Ascending aorta (tissue), 2 donors: ENCODE measurements at regions of chr5 and their contacts with region 1.

Region 1: GRCh38 chr5:60944904-60945812 is at the starts of genes ERCC8 and NDUFAF2:
- DNase-seq: peak; percentile 77 to 96
- H3K4me3 ChIP-seq: peak within 1 kb of the TSS; percentile 80 to 90
- H3K27ac ChIP-seq: peak within 1 kb of the TSS; percentile 84 to 91
- H3K4me1 ChIP-seq: peaks cover 0 to 4% of the 10 kb centered on the region in 2 donors
- H3K27me3 ChIP-seq: no peaks in the 10 kb centered on the region
- CTCF ChIP-seq: no peak
- total RNA-seq, gene ERCC8: 2.3 TPM
- total RNA-seq, gene NDUFAF2: 38.3 TPM

Region 2: GRCh38 chr5:61162010-61162831 is 217.1 kb after region 1 on chr5 and contains the start of gene SMIM15:
- intact Hi-C with region 1: loop called (anchors 2 kb)
- DNase-seq: peak; percentile 53 to 93
- H3K4me3 ChIP-seq: peak within 1 kb of the TSS; percentile 85 to 86
- H3K27ac ChIP-seq: peak within 1 kb of the TSS; percentile 85 to 91
- H3K4me1 ChIP-seq: peaks cover 0 to 6% of the 10 kb centered on the region in 2 donors
- H3K27me3 ChIP-seq: no peaks in the 10 kb centered on the region
- CTCF ChIP-seq: no peak
- total RNA-seq, gene SMIM15: 22.4 TPM

Region 3: DNA sequence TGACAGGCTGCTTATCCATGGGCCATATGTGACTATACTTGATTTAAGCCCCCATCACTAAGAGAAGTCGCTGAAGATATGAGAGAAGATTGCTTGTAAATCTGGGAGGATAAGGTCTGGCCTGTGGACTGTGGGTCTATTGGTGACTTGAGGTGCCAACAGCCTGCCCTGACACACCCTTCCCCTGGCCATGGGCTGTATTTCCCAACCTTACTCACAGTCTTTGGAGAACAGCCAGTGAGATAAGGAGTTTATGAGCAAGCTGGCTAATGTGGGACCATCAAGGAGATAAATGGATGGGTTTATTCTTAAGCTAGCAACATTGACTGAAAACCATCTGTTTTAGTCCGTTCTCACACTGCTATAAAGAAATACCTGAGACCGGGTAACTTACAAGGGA is 618.2 kb after region 1 on chr5:
- intact Hi-C with region 1: no loop called
- DNase-seq: no peak
- H3K4me3 ChIP-seq: no peak overlapping the region
- H3K27ac ChIP-seq: no peak overlapping the region
- H3K4me1 ChIP-seq: no peaks in the 10 kb centered on the region
- H3K27me3 ChIP-seq: no peaks in the 10 kb centered on the region
- CTCF ChIP-seq: no peak

Region 4: DNA sequence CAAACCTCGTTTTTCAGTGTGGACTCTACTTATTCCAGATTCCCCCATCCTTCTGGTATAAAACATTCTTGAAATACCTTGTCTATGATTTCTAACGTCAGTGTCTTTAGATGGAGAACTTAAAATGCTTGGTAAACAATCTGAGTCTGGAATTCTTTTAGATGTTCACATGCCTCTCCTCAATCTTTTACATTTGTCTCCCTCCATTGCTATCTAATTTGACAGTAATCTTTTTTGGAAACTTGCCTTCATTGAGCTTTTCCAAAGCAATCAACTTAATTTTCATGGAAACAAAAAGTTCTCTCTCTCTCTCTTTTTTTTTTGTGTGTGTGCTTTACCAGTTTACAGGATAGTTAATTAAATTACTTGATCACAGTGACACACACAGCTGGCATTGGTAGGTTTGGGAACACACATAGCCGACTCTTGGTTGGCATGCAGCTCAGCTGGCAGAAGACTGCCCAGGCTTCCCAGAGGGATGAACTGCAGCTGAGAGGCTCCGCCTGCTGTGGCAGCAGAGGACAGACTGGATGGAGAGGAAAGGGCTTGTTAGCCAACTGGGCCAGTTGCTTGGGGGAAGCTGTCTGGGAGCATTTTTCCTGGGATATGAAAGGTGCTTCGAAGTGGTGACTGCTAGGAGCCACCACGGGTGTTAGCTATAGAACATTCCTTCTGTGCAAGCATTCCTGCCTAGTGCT is 658.2 kb after region 1 on chr5:
- intact Hi-C with region 1: no loop called
- DNase-seq: no peak
- H3K4me3 ChIP-seq: no peak overlapping the region
- H3K27ac ChIP-seq: no peak overlapping the region
- H3K4me1 ChIP-seq: peaks cover 0 to 11% of the 10 kb centered on the region in 2 donors
- H3K27me3 ChIP-seq: no peaks in the 10 kb centered on the region
- CTCF ChIP-seq: no peak

Region 5: GRCh38 chr5:62412537-62413329 is 1467.6 kb after region 1 on chr5 and contains the start of gene IPO11:
- intact Hi-C with region 1: loop called (anchors 10 kb)
- DNase-seq: peak; percentile 96 to 99
- H3K4me3 ChIP-seq: peak within 1 kb of the TSS; percentile 94 to 96
- H3K27ac ChIP-seq: peak within 1 kb of the TSS; percentile 52 to 68
- H3K4me1 ChIP-seq: peaks cover 4 to 7% of the 10 kb centered on the region in 2 donors
- H3K27me3 ChIP-seq: no peaks in the 10 kb centered on the region
- CTCF ChIP-seq: no peak
- total RNA-seq, gene IPO11: 11.8 TPM